ENCODE measurements at regions of chr15 and their contacts with region 1.

Region 1: GRCh38 chr15:43285609-43286037 is 18.9 kb upstream of the TGM5 start:
- DNase-seq: peak; percentile 80
- H3K4me3 ChIP-seq: peak overlapping the region in 1 of 2 experiments; percentile 4; a peak in 1 of 4 replicates
- H3K27ac ChIP-seq: no peak overlapping the region
- H3K4me1 ChIP-seq: no peaks in the 10 kb centered on the region
- H3K27me3 ChIP-seq: peaks cover 16% of the 10 kb centered on the region; the same call in 1 of the 2 replicates
- CTCF ChIP-seq: peak; percentile 87
- EP300 ChIP-seq: no peak
- RAD21 ChIP-seq: peak; percentile 98

Region 2: GRCh38 chr15:43194795-43195194 is 90.8 kb before region 1 on chr15:
- CTCF ChIA-PET with region 1: interaction called, 41 read pairs
- POLR2A ChIA-PET with region 1: no interaction called
- DNase-seq: no peak
- H3K4me3 ChIP-seq: no peak overlapping the region
- H3K27ac ChIP-seq: no peak overlapping the region
- H3K4me1 ChIP-seq: no peaks in the 10 kb centered on the region; a peak in 1 of 4 replicates
- H3K27me3 ChIP-seq: no peaks in the 10 kb centered on the region
- CTCF ChIP-seq: no peak
- EP300 ChIP-seq: no peak
- RAD21 ChIP-seq: no peak

Region 3: GRCh38 chr15:43218908-43219706 is 66.5 kb before region 1 on chr15:
- CTCF ChIA-PET with region 1: interaction called, 167 read pairs
- POLR2A ChIA-PET with region 1: no interaction called
- DNase-seq: peak; percentile 78
- H3K4me3 ChIP-seq: no peak overlapping the region
- H3K27ac ChIP-seq: peak overlapping the region in 1 of 2 experiments; percentile 65; a peak in 1 of 4 replicates
- H3K4me1 ChIP-seq: peaks cover 0 to 15% of the 10 kb centered on the region in 2 experiments; a peak in 1 of 4 replicates
- H3K27me3 ChIP-seq: peaks cover 8% of the 10 kb centered on the region; the same call in 1 of the 2 replicates
- CTCF ChIP-seq: peak; percentile 33; the same call in 1 of the 2 replicates
- EP300 ChIP-seq: peak in 1 of 2 experiments; percentile 36; a peak in 1 of 4 replicates
- RAD21 ChIP-seq: no peak

Region 4: GRCh38 chr15:43232289-43232874 is 53.2 kb before region 1 on chr15:
- CTCF ChIA-PET with region 1: interaction called, 167 read pairs
- POLR2A ChIA-PET with region 1: no interaction called
- DNase-seq: no peak
- H3K4me3 ChIP-seq: no peak overlapping the region
- H3K27ac ChIP-seq: no peak overlapping the region
- H3K4me1 ChIP-seq: no peaks in the 10 kb centered on the region
- H3K27me3 ChIP-seq: peaks cover 18% of the 10 kb centered on the region; the same call in 1 of the 2 replicates
- CTCF ChIP-seq: no peak
- EP300 ChIP-seq: no peak
- RAD21 ChIP-seq: no peak

Region 5: DNA sequence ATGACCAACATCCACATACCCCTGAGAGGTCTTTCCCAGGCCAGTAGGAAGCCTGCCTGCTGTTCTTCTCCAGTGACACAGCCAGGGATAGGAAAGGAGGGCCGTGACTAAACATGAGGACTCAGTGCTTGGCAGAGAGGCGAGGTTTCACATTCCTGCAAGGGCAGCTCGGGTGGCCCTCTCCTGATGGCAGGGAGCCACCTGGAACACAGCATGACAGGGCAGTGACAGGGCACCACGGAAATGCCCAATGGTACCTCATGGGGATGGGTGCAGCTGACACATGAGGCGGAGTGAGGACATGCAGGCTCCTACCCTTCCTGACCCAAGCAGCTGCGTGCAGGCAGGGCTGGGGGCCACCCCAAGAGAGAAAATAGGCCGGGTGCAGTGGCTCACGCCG is 11.5 kb before region 1 on chr15:
- CTCF ChIA-PET with region 1: interaction called, 38 read pairs
- POLR2A ChIA-PET with region 1: no interaction called
- DNase-seq: no peak
- H3K4me3 ChIP-seq: no peak overlapping the region
- H3K27ac ChIP-seq: no peak overlapping the region
- H3K4me1 ChIP-seq: no peaks in the 10 kb centered on the region
- H3K27me3 ChIP-seq: peaks cover 4% of the 10 kb centered on the region; the same call in 1 of the 2 replicates
- CTCF ChIP-seq: no peak
- EP300 ChIP-seq: no peak
- RAD21 ChIP-seq: no peak

Region 6: GRCh38 chr15:43329960-43330779 is 44.5 kb after region 1 on chr15 and contains the start of gene LCMT2:
- CTCF ChIA-PET with region 1: interaction called, 22 read pairs
- POLR2A ChIA-PET with region 1: no interaction called
- DNase-seq: peak; percentile 93
- H3K4me3 ChIP-seq: peak within 1 kb of the TSS; percentile 76 to 88
- H3K27ac ChIP-seq: peak within 1 kb of the TSS; percentile 80 to 96
- H3K4me1 ChIP-seq: peaks cover 6 to 13% of the 10 kb centered on the region in 2 experiments; a peak in 3 of 4 replicates
- H3K27me3 ChIP-seq: no peaks in the 10 kb centered on the region
- CTCF ChIP-seq: no peak
- EP300 ChIP-seq: peak in 1 of 2 experiments; percentile 26; a peak in 1 of 4 replicates
- RAD21 ChIP-seq: no peak
- polyA plus RNA-seq, gene LCMT2: 7.1 and 9.6 TPM in 2 replicates

Measured in SK-N-SH (cell line).